ENCODE measurements at regions of chr6 and their contacts with region 1.

Region 1: GRCh38 chr6:30483677-30484279 is 5.5 kb upstream of the HLA-E start:
- DNase-seq: peak; percentile 65
- ATAC-seq: no peak
- H3K4me3 Mint-ChIP-seq: no peak overlapping the region
- H3K27ac Mint-ChIP-seq: no peak overlapping the region
- H3K4me1 Mint-ChIP-seq: peaks cover 30% of the 10 kb centered on the region
- H3K27me3 Mint-ChIP-seq: peaks cover 40% of the 10 kb centered on the region

Region 2: DNA sequence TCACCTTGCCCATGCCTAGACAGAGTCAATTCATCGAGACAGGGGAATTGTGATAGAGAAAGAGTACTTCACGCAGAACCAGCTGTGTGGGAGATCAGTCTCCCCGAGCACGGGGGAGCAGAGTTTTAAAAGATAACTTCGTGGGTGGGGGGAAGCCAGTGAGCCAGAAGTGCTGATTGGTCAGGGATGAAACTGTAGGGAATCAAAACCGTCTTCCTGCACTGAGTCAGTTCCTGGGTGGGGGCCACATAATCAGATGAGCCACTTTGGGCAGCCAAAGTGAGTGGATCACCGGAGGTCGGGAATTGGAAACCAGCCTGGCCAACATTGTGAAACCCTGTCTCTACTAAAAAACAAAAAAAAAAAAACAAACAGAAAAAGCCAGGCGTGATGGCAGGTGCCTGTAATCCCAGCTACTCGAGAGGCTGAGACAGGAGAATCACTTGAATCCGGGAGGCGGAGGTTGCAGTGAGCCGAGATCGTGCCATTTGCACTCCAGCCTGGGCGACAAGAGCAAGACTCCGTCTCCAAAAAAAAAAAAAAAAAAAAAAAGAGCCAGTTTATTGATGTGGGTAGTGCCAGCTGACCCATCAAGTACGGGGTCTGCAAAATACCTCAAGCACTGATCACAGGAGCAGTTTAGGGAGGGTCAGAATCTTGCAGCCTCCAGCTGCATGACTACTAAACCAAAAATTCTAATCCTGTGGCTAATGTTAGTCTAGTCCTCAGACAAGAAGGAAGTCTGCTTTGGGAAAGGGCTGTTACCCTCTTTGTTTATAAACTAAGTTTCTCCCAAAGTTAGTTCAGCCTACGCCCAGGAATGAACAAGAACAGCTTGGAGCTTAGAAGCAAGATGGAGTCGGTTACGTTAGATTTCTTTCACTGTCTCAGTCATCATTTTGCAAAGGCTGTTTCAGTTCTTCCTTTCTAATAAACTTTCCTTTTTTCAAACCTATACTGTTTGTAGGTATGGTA is 161.0 kb before region 1 on chr6:
- CTCF ChIA-PET with region 1: no interaction called
- POLR2A ChIA-PET with region 1: no interaction called
- DNase-seq: no peak
- ATAC-seq: no peak
- H3K4me3 Mint-ChIP-seq: no peak overlapping the region
- H3K27ac Mint-ChIP-seq: no peak overlapping the region
- H3K4me1 Mint-ChIP-seq: peaks cover 73% of the 10 kb centered on the region
- H3K27me3 Mint-ChIP-seq: no peaks in the 10 kb centered on the region

Region 3: DNA sequence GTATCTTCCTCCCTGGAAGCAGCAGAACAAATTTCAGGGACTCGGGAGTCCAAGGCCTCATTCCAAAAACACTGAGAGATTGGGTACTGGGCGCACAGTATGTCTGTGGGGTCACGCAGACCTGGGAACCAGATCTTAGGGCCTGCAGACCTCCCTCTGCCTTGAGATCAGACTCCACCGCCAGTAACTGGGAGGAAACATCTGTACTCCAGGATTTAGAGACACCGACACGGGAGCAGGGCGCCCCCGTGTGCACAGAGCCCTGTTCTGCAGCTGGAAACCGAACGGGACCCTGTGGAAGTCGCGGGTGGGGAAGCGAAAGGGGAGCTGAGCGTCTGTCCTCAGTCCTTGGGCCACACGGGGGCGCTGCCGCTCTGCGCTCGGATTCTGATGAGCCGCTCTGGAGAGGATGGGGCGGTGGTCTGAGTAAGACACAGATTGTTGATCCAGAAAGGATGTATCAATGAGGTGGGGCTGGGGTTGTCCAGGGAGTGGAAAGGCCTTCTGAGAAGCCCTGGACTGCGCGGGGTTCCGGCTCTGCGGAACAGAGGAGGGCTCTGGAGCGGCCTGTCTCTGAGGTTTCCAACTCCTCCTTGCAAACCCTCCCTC is 30.2 kb before region 1 on chr6:
- CTCF ChIA-PET with region 1: interaction called, 51 read pairs
- POLR2A ChIA-PET with region 1: interaction called, 3 read pairs
- DNase-seq: peak; percentile 89
- ATAC-seq: peak; percentile 86
- H3K4me3 Mint-ChIP-seq: no peak overlapping the region
- H3K27ac Mint-ChIP-seq: no peak overlapping the region
- H3K4me1 Mint-ChIP-seq: peaks cover 29% of the 10 kb centered on the region
- H3K27me3 Mint-ChIP-seq: peaks cover 84% of the 10 kb centered on the region

Region 4: GRCh38 chr6:30500421-30501355 is 16.9 kb after region 1 on chr6:
- CTCF ChIA-PET with region 1: interaction called, 15 read pairs
- POLR2A ChIA-PET with region 1: no interaction called
- DNase-seq: no peak
- ATAC-seq: peak; percentile 65
- H3K4me3 Mint-ChIP-seq: peak overlapping the region; percentile 65
- H3K27ac Mint-ChIP-seq: peak overlapping the region; percentile 76
- H3K4me1 Mint-ChIP-seq: peaks cover 29% of the 10 kb centered on the region
- H3K27me3 Mint-ChIP-seq: no peaks in the 10 kb centered on the region

Region 5: DNA sequence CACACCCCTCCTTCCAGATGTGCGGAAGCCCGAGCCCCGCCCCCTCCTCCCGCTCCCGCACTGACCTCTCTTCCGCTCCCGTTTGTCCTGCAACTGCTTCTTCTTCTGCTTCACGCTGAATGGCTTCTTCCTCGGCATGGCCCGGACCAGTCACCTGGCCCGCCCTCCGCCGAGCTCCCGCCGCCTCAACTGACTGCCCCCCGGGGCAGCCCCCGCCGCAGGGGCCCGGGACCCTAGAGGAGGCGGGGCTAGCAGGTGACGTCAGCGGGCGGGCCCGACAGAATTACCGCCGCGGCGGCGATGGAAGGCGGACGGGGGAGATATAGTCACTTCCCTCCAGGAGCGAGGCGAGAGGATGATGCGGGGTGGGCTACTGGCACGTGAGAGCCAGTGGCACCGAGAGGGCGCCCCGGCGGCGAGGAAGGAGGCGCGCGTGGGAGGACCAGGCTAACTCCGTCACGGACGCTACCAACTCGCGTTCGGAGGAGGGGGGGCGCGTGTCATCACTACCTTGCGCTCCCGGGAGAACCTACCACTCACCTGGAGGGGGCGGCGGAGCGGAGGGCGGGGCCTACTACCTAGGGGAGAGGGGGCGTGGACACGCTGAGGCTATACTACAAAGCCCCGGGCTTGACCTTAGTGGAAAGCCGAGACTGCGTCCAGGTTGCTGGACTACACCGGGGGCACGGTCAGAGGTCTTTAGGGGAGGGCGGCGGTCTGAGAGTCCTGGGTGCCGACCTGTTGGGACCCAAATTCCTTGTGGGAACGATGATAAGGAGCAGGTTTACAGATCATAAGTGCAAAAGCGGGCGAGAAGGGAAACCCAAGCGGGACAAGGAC is 72.5 kb after region 1 on chr6 and contains the start of gene GNL1:
- CTCF ChIA-PET with region 1: interaction called, 64 read pairs
- POLR2A ChIA-PET with region 1: interaction called, 3 read pairs
- DNase-seq: peak; percentile 99
- ATAC-seq: peak; percentile 90
- H3K4me3 Mint-ChIP-seq: peak within 1 kb of the TSS; percentile 96
- H3K27ac Mint-ChIP-seq: peak within 1 kb of the TSS; percentile 96
- H3K4me1 Mint-ChIP-seq: peaks cover 30% of the 10 kb centered on the region
- H3K27me3 Mint-ChIP-seq: no peaks in the 10 kb centered on the region
- total RNA-seq, gene GNL1: 63.7 to 69.9 TPM

Region 6: DNA sequence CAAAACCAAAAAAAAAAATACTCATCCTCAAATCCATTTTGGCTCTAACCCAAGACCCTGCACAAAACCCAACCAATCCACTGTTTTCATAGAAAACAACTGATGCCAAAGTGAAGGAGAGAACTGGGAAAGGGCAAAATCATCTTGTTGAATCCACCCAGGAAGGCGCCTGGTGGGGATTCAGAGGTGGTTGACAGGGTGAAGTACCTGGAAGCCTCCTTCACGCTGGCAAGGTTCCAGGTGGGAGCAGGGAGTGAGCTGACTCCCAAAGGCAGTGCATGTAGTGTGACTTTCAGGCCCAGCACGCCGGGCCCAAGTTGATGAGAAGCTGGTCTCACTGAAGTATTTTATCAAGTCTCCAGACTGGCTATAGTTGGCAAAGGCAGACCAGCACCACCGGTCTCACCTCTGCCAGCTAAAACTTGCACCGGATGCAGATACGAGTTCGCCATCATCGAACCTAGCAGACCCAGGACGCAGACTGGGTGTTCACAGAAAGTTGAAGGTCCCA is 116.7 kb after region 1 on chr6:
- CTCF ChIA-PET with region 1: interaction called, 107 read pairs
- POLR2A ChIA-PET with region 1: interaction called, 6 read pairs
- DNase-seq: no peak
- ATAC-seq: no peak
- H3K4me3 Mint-ChIP-seq: no peak overlapping the region
- H3K27ac Mint-ChIP-seq: no peak overlapping the region
- H3K4me1 Mint-ChIP-seq: peaks cover 18% of the 10 kb centered on the region
- H3K27me3 Mint-ChIP-seq: no peaks in the 10 kb centered on the region

Measured in activated CD8-positive, alpha-beta T cell treated with anti-CD3 and anti-CD28 coated beads, Interleukin-2, amount 10 ng/mL, durations not matched to agents 7 days and 5 days (primary cell).